ENCODE measurements at regions of chr10 and their contacts with region 1.

Region 1: GRCh38 chr10:48649349-48649944 is 35.2 kb upstream of the WDFY4 start:
- DNase-seq: peak in 2 of 10 donors; percentile 42 to 89

Region 2: GRCh38 chr10:48377751-48378535 is 271.5 kb before region 1 on chr10:
- intact Hi-C with region 1: no loop called
- DNase-seq: no peak

Region 3: DNA sequence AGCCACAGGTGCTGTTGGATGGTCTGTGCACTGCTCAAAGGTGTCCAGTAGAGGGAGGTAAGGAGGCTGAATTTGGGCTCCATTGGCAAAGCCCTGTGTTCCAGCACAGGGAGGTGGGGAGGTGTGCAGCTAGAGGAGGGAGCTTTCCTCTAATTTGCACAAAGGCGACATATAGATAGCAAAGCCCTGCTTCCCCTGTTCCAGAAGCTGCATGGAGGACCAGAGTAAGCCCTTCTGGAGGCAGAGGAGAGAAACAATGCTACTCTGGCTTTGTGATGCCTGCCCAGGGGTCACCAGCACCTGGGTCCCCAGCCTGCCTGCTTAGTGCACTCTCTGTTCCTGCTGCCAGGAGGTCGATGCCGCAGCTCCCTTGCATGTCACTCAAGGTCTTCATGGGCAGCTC is 41.2 kb before region 1 on chr10:
- intact Hi-C with region 1: loop called (anchors 5 kb)
- DNase-seq: no peak

Region 4: GRCh38 chr10:49012603-49013002 is 363.2 kb after region 1 on chr10:
- intact Hi-C with region 1: no loop called
- DNase-seq: no peak

Measured in posterior cingulate gyrus (tissue), 11 donors.